ENCODE measurements at regions of chr3 and their contacts with region 1.

Region 1: GRCh38 chr3:58299839-58300516 is 6.1 kb upstream of the RPP14 start:
- DNase-seq: no peak
- H3K4me3 ChIP-seq: no peak overlapping the region
- H3K27ac ChIP-seq: no peak overlapping the region
- H3K4me1 ChIP-seq: no peaks in the 10 kb centered on the region
- H3K27me3 ChIP-seq: peaks cover 0 to 19% of the 10 kb centered on the region in 2 donors
- CTCF ChIP-seq: peak; percentile 49 to 61

Region 2: DNA sequence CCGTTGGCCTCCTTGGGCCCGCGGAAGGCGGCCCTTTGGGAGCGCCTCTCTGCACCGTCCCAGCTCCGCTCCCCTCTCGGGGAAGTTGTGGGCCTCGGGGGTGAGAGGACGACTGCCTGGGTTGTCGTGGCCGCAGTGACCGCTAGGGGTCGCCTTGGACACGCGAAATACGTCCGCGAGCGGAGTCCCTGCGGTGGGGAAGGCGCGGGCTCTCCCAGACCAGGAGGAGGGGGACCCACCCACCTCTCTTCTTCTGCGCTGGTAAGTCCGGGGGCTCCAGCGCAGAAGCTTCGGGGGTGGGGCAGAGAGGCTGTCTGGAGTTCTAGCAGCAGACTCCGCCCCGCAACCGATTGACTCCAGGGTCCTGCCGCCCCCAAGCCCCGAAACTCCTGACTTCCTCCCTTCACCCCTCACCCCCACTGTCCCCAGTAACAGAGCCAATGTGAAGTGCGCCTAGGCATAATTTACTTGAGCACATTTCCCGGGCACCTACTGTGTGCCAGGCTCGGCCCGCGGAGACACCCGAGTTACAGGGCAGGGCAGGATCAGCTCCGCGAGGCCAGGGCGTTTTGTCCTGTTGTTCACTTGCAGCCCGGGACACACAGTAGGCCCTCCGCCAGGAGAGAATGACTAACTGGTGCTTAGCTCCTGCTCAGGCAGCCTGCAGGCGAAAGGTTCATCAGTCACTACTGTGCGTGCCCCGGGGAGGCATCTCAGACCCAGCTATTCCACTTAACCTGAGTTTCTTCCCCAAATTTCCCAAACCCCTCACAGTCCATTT is 122.0 kb before region 1 on chr3:
- intact Hi-C with region 1: loop called (anchors 5 kb)
- DNase-seq: peak; percentile 85 to 93
- H3K4me3 ChIP-seq: peak overlapping the region; percentile 39 to 56
- H3K27ac ChIP-seq: peak overlapping the region in 1 of 2 donors; percentile 2
- H3K4me1 ChIP-seq: peaks cover 0 to 35% (median 26%) of the 10 kb centered on the region in 4 donors
- H3K27me3 ChIP-seq: no peaks in the 10 kb centered on the region
- CTCF ChIP-seq: peak; percentile 91 to 93

Region 3: GRCh38 chr3:58191361-58191991 is 108.5 kb before region 1 on chr3:
- intact Hi-C with region 1: loop called (anchors 5 kb)
- DNase-seq: no peak
- H3K4me3 ChIP-seq: no peak overlapping the region
- H3K27ac ChIP-seq: no peak overlapping the region
- H3K4me1 ChIP-seq: no peaks in the 10 kb centered on the region
- H3K27me3 ChIP-seq: no peaks in the 10 kb centered on the region
- CTCF ChIP-seq: no peak

Region 4: DNA sequence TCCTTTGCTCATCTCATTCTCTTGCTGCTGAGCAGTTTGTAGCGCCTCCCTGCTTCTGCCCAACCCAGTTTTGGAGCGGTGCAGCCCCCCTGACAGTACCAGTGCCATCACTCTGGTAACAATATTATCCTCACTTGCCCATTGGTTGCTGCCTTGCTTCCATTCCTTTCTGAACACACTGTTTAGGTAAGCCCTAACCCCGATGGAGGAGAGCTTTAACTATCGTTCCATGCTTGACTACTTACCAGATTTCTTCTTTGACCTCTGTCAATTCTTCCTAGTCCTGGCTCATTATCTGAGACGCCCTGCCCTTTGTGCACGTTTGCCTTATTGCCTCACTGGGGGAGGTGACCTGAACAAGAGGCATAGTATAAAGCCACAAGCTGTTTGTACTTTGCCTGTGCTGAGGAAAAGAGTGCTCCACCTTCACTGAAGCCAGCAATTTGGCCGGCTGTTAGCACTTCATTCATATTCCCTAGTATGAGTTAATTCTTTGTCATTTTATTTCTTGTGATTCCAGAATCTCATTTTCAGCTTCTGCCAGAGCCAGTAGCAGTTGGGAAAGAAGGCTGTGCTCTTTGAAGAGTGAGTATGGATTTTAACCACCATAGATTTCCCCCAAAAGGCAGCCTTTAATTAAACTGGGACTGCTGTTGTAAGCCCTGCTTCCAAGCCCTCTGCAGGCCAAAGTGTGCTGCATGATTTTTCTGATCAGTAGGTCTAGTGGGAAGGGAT is 50.5 kb before region 1 on chr3:
- intact Hi-C with region 1: no loop called
- DNase-seq: no peak
- H3K4me3 ChIP-seq: no peak overlapping the region
- H3K27ac ChIP-seq: no peak overlapping the region
- H3K4me1 ChIP-seq: no peaks in the 10 kb centered on the region
- H3K27me3 ChIP-seq: no peaks in the 10 kb centered on the region
- CTCF ChIP-seq: no peak

Region 5: DNA sequence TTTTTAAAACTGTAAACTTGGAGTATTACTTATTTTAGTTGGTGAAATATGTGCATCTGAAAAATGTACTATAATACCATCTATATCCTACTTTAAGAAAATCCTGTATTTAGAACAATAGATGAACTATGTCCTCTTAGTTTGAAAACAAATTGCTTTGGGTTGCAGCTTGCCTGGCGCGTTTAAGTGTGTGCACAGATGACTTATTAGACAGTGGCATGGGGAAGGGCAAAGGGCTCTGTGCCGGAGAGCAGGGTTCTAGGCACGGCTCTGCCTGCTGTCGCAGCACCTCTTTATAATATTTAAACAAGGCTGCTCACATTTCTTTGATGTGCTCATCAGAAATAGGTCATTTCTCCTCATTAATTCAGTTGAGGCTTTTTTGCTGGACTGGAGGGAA is 42.7 kb after region 1 on chr3:
- intact Hi-C with region 1: no loop called
- DNase-seq: no peak
- H3K4me3 ChIP-seq: no peak overlapping the region
- H3K27ac ChIP-seq: no peak overlapping the region
- H3K4me1 ChIP-seq: no peaks in the 10 kb centered on the region
- H3K27me3 ChIP-seq: no peaks in the 10 kb centered on the region
- CTCF ChIP-seq: no peak

Measured in tibial artery (tissue), 4 donors.